ENCODE measurements at regions of chr13 and their contacts with region 1.

Region 1: DNA sequence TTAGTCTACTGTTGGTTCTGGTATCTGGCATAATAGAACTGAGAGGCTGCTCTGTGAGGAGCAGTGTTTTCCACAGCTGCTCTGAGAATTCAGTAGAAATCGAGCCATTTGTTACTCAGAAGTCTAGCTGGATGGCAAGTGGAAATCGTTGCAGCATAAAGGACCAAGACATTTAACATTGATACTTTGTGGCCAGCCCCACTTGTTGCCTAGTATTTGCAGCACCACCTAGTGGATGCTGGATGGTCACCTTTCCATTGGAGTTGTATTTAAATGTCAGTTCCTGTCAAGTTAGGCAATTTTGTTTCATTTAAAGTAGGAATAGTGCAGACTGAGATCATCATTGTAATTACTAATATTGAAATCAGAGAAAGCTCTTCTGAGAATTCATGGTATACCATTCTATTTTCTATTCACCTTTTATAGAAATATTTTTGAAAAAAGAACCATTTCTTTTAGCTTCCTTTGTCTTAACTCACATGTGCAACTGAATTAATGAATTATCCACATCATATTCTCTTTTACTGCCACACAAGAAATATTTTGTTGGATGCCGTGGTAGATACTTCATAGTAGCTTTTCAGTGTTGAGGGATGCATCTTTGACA is 64.6 kb downstream of the PDS5B start:
- DNase-seq: peak; percentile 75
- H3K4me3 ChIP-seq: no peak overlapping the region
- H3K27ac ChIP-seq: no peak overlapping the region
- H3K4me1 ChIP-seq: peaks cover 42% of the 10 kb centered on the region
- CTCF ChIP-seq: peak; percentile 96

Region 2: DNA sequence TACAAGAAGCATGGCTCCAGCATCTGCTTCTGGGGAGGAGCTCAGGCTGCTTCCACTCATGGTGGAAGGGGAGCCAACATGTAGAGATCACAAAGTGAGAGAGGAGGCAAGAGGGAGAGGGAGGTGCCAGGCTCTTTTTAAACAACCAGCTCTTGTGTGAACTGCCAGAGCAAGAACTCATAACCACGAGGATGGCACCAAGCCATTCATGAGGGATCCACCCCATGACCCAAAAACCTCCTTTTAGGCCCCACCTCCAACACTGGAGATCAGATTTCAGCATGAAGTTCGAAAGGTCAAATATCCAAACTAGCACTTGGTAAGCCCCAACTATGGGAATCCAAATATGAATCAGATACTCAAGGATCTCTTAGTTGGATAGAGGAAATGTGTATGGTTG is 780.3 kb before region 1 on chr13:
- CTCF ChIA-PET with region 1: no interaction called
- POLR2A ChIA-PET with region 1: no interaction called
- intact Hi-C with region 1: no loop called
- DNase-seq: no peak
- H3K4me3 ChIP-seq: no peak overlapping the region
- H3K27ac ChIP-seq: no peak overlapping the region
- H3K4me1 ChIP-seq: no peaks in the 10 kb centered on the region
- CTCF ChIP-seq: no peak

Region 3: DNA sequence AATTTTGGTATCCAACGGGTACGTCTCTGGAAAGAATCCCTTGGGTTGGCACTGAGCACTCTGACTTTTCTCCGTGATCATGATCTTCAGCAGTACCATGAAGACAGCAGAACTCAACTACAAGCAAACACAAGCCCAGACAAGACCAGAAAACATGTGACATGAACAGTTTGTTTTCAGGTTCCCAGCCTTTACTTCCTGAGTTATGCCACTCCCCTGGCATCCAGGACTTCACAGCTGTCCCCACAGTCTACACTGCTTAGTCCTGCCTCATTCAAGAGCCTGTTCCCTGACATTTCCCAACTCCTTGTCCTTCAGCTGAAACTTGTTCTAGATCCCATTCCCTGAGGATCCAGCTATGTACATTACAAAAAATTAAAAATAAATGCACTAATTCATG is 218.0 kb before region 1 on chr13:
- CTCF ChIA-PET with region 1: no interaction called
- POLR2A ChIA-PET with region 1: no interaction called
- intact Hi-C with region 1: no loop called
- DNase-seq: no peak
- H3K4me3 ChIP-seq: no peak overlapping the region
- H3K27ac ChIP-seq: no peak overlapping the region
- H3K4me1 ChIP-seq: peaks cover 9% of the 10 kb centered on the region
- CTCF ChIP-seq: no peak

Region 4: GRCh38 chr13:32639502-32640105 is 11.2 kb before region 1 on chr13:
- CTCF ChIA-PET with region 1: no interaction called
- POLR2A ChIA-PET with region 1: interaction called, 12 read pairs
- intact Hi-C with region 1: no loop called
- DNase-seq: peak; percentile 70
- H3K4me3 ChIP-seq: no peak overlapping the region
- H3K27ac ChIP-seq: no peak overlapping the region
- H3K4me1 ChIP-seq: peaks cover 37% of the 10 kb centered on the region
- CTCF ChIP-seq: peak; percentile 98